Activated CD4-positive, alpha-beta memory T cell treated with anti-CD3 and anti-CD28 coated beads, Interleukin-2, amount 10 ng/mL, durations not matched to agents 7 days and 5 days (primary cell): ENCODE measurements at regions of chr13 and their contacts with region 1.

Region 1: GRCh38 chr13:20703780-20704445 is 414 bp downstream of the IL17D start:
- DNase-seq: peak; percentile 77
- H3K4me3 Mint-ChIP-seq: no peak overlapping the region
- H3K27ac Mint-ChIP-seq: no peak overlapping the region
- H3K4me1 Mint-ChIP-seq: peaks cover 14% of the 10 kb centered on the region
- H3K27me3 Mint-ChIP-seq: peaks cover 41% of the 10 kb centered on the region

Region 2: DNA sequence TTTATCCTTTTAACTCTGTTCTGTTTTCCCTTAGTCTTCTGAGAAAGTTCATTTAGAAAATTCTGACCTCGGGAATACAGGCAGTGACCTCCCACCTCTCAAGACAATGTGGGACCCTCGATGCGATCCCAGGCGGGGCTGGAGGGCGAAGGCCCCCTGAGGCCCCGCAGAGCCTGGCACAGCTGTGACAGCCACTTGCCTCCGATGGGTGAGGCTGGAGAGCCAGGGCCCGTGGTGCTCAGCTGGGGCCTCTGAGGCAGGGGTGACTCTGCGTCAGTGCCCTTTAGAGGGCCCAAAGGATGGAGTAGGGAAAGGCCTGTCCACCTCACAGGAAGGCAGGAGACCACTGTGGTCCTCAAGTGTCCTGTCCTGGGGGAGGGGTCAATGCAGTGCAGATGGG is 553.4 kb before region 1 on chr13:
- CTCF ChIA-PET with region 1: no interaction called
- POLR2A ChIA-PET with region 1: no interaction called
- DNase-seq: no peak
- H3K4me3 Mint-ChIP-seq: no peak overlapping the region
- H3K27ac Mint-ChIP-seq: no peak overlapping the region
- H3K4me1 Mint-ChIP-seq: no peaks in the 10 kb centered on the region
- H3K27me3 Mint-ChIP-seq: peaks cover 37% of the 10 kb centered on the region

Region 3: GRCh38 chr13:20495082-20496023 is 208.6 kb before region 1 on chr13:
- CTCF ChIA-PET with region 1: interaction called, 16 read pairs
- POLR2A ChIA-PET with region 1: no interaction called
- DNase-seq: peak; percentile 70
- H3K4me3 Mint-ChIP-seq: no peak overlapping the region
- H3K27ac Mint-ChIP-seq: no peak overlapping the region
- H3K4me1 Mint-ChIP-seq: peaks cover 7% of the 10 kb centered on the region
- H3K27me3 Mint-ChIP-seq: no peaks in the 10 kb centered on the region

Region 4: GRCh38 chr13:20592606-20593005 is 111.3 kb before region 1 on chr13:
- CTCF ChIA-PET with region 1: no interaction called
- POLR2A ChIA-PET with region 1: no interaction called
- DNase-seq: no peak
- H3K4me3 Mint-ChIP-seq: no peak overlapping the region
- H3K27ac Mint-ChIP-seq: no peak overlapping the region
- H3K4me1 Mint-ChIP-seq: no peaks in the 10 kb centered on the region
- H3K27me3 Mint-ChIP-seq: no peaks in the 10 kb centered on the region

Region 5: GRCh38 chr13:20749377-20749776 is 45.5 kb after region 1 on chr13:
- CTCF ChIA-PET with region 1: no interaction called
- POLR2A ChIA-PET with region 1: no interaction called
- DNase-seq: no peak
- H3K4me3 Mint-ChIP-seq: no peak overlapping the region
- H3K27ac Mint-ChIP-seq: no peak overlapping the region
- H3K4me1 Mint-ChIP-seq: no peaks in the 10 kb centered on the region
- H3K27me3 Mint-ChIP-seq: no peaks in the 10 kb centered on the region

Region 6: GRCh38 chr13:20760872-20761271 is 57.0 kb after region 1 on chr13:
- CTCF ChIA-PET with region 1: no interaction called
- POLR2A ChIA-PET with region 1: no interaction called
- DNase-seq: no peak
- H3K4me3 Mint-ChIP-seq: no peak overlapping the region
- H3K27ac Mint-ChIP-seq: no peak overlapping the region
- H3K4me1 Mint-ChIP-seq: no peaks in the 10 kb centered on the region
- H3K27me3 Mint-ChIP-seq: no peaks in the 10 kb centered on the region

Region 7: DNA sequence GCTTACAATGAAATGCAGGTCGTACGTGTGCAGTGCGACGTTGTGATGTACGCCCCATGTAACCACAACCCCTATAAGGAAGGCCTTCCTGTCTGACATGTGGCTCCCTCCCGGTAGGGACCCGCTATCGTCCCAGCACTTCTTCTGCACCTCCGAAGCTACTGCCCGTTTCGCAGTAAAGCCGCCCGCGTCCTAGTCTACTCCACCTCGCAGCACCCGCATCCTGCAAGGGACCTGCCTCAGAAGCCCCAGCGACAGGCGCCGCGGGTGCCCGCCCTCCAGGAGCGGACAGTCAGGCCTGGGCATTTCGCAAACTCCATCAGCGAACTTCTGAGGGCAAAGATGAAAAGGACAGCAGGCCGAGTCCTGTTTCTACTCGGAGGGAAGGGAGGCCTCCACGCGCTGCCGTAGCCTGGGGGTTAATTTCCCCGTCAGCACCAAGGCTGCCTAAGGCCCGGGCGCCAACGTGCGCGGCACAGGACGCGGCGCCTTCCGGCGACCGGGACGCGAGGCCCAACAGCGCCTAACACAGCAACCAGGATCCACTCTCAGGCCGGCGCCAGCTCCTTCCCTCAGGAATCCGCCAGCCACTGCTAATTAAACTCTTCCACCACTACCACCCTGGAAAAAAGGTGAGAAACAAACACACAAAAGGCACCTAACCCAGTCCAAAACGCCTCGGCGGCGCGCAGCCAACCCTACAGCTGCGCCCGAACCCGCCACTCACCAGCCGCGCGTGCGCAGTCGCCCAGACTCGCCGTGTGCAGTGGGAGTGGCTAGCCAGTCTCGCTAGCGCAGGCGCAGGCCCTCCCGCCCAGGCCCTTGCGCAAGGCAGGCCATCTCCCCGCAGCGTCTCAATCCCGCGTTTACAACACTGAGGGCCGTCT is 69.5 kb after region 1 on chr13 and contains the start of gene EEF1AKMT1:
- CTCF ChIA-PET with region 1: no interaction called
- POLR2A ChIA-PET with region 1: interaction called, 16 read pairs
- DNase-seq: peak; percentile 95
- H3K4me3 Mint-ChIP-seq: peak within 1 kb of the TSS; percentile 80
- H3K27ac Mint-ChIP-seq: peak within 1 kb of the TSS; percentile 99
- H3K4me1 Mint-ChIP-seq: peaks cover 35% of the 10 kb centered on the region
- H3K27me3 Mint-ChIP-seq: no peaks in the 10 kb centered on the region
- total RNA-seq, gene EEF1AKMT1: 7.9 TPM